ENCODE measurements at regions of chrX and their contacts with region 1.

Region 1: DNA sequence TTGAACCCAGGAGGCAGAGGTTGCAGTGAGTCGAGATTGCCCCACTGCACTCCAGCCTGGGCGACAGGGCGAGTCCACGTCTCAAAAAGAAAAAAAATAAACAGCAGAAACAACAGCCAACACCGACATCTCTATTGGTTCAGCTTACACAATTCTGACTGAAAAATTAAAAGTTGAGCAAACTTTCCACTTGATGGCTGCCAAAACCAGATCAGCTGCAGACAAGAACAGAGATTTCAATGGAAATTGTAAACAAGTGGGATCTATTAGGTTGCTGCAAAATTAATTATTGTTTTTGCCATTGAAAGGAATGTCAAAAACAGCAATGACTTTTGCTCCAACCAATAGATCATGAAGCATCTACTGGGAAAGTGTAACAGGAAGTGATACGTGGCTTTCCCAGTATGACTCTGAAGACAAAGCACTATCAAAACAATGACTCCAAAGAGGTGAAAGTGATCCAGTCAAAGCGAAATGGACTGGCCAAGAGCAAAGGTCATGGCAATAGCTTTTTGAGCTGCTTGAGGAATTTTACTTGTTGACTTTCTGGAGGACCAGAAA is 26.3 kb downstream of the UPF3B start:
- DNase-seq: peak; percentile 0
- H3K4me3 Mint-ChIP-seq: no peak overlapping the region
- H3K27ac Mint-ChIP-seq: no peak overlapping the region
- H3K4me1 Mint-ChIP-seq: peaks cover 10% of the 10 kb centered on the region
- H3K27me3 Mint-ChIP-seq: no peaks in the 10 kb centered on the region

Region 2: DNA sequence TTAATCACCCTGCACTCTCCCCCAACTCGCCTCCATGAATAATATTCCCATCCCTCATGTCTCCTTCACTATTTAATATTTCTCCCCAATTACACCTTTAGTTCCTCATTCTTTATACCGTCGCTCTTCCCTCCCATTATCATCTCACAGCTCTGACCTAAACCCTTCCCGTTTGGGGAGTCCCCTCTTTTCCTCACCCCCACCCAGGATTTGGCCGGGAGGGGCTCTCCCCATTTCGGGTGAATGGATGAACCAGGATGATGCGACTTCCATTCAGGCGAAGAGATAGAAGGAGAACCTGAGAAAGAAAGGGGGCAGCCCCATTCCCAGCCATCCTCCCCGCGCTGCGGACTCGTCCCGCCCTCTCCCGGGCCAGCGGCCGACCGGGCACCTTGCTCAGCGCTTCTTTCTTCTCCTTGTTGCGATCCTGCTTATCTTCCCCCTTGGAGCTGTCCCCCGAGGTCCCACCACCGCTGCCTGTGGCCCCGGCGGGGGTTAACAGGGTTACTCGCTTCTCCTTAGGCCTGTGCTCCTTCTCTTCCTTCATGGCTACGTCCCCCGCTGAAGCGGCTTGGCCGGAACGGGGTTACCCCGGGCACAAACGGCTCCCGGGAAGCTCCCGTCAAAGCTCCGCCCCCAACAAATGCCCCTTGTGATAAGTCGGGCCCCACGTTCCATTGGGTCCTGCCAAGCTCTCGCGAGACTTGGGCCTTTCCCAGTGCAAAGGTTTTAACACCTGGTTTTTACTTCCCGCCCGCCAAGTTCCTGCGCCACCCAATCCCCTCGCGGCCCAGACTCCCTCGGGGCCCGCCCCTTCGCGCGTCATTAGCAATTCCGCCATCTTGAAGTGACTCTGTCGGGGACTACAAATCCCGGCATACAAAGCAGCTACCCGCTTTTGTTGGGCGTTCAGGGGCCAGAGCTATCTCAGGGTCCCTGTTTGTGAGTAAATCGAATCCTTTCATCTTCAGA is 26.2 kb after region 1 on chrX and contains the start of gene UPF3B:
- intact Hi-C with region 1: loop called (anchors 1 kb)
- DNase-seq: peak; percentile 90
- H3K4me3 Mint-ChIP-seq: peak within 1 kb of the TSS; percentile 94
- H3K27ac Mint-ChIP-seq: peak within 1 kb of the TSS; percentile 97
- H3K4me1 Mint-ChIP-seq: peaks cover 8% of the 10 kb centered on the region
- H3K27me3 Mint-ChIP-seq: no peaks in the 10 kb centered on the region
- total RNA-seq, gene UPF3B: 11.0 and 13.0 TPM in 2 replicates

Measured in activated T-helper 1 cell treated with anti-CD3 and anti-CD28 coated beads, Interleukin-12 subunit alpha, Interleukin-12 subunit beta, Interleukin-2, Interleukin-4 antibody, amounts not matched to agents 30 ng/mL and 10 ng/mL and 1 ng/mL, durations not matched to agents 14 hours and 24 hours and 36 hours (primary cell).